ENCODE measurements at regions of chr9 and their contacts with region 1.

Region 1: DNA sequence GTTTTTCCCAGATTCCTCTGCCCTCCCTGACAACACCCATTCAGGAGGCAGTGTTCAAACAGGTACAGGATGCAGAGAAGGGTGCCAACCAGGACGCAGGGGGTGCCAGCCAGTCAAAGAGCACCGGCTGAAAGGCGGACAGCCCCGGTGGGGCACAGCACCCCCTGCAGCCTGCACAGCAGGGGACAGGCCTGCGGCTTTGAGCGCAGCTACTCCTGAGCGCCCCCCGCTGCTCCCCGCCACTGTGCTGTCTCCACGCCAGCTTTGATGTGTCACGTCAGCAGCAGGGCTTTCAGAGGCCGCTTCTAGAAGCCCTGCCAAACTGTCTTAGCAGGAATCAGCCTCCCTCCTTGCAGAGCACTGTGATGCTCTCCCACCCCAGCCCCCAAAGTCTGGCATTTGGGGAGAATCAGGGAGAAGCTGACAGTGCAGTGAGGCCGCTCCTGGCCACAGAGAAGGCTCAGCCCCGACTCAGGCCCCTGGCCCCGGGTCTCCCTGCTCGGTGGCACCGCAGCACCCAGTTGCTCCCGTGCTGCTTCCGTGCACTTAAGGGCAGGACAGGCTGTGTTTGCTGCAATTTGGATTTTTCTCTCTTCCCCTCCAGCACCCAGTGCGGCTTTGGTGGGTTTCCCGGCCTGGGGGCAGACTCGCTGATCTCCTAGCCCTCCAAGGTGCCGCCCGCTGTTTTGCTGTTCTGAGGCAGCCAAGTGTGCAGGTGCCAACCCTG is 20.3 kb downstream of the AK8 start:
- DNase-seq: no peak
- ATAC-seq: no peak
- H3K4me3 ChIP-seq: no peak overlapping the region
- H3K4me3 Mint-ChIP-seq: no peak overlapping the region
- H3K27ac ChIP-seq: no peak overlapping the region
- H3K27ac Mint-ChIP-seq: no peak overlapping the region
- H3K4me1 ChIP-seq: peaks cover 11% of the 10 kb centered on the region
- H3K4me1 Mint-ChIP-seq: peaks cover 4 to 9% of the 10 kb centered on the region in 2 donors
- H3K27me3 ChIP-seq: no peaks in the 10 kb centered on the region
- H3K27me3 Mint-ChIP-seq: peaks cover 0 to 5% of the 10 kb centered on the region in 2 donors
- CTCF ChIP-seq: no peak

Region 2: DNA sequence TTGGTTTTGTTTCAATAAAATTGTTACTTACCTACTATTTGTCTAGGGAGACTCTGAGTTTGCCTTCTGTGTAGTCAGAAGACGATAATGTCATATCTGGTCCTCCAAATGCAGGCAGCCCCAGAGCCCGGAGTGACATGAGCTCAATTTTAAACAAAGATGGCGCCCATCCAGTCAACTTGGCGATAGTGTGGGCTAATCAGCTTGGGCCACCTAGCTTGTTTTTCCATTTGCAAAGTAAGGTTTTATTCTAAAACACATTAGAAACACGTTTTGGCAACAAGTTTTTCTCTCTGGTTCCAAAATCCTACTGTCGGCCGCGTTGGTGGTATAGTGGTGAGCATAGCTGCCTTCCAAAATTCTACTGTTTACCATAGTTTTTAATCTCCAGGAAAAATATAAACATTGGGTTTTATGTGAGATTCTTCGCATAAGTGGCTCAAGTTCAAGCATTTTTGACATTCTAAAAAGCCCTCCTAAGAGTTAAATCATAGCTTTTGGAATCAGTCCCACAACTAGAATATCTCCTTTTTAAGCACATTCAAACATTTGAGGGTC is 73.5 kb after region 1 on chr9:
- intact Hi-C with region 1: loop called (anchors 2 kb)
- DNase-seq: no peak
- ATAC-seq: no peak
- H3K4me3 ChIP-seq: no peak overlapping the region
- H3K4me3 Mint-ChIP-seq: no peak overlapping the region
- H3K27ac ChIP-seq: no peak overlapping the region
- H3K27ac Mint-ChIP-seq: no peak overlapping the region
- H3K4me1 ChIP-seq: no peaks in the 10 kb centered on the region
- H3K4me1 Mint-ChIP-seq: peaks cover 0 to 15% of the 10 kb centered on the region in 2 donors
- H3K27me3 ChIP-seq: no peaks in the 10 kb centered on the region
- H3K27me3 Mint-ChIP-seq: no peaks in the 10 kb centered on the region
- CTCF ChIP-seq: no peak